ENCODE measurements at regions of chr2 and their contacts with region 1.

Region 1: GRCh38 chr2:219057709-219058540 is 2.8 kb downstream of the IHH start:
- DNase-seq: peak; percentile 86
- H3K4me3 ChIP-seq: peak overlapping the region; percentile 12 to 68 (median 55)
- H3K27ac ChIP-seq: peak overlapping the region; percentile 62 to 90 (median 86)
- H3K4me1 ChIP-seq: peaks cover 13 to 42% (median 37%) of the 10 kb centered on the region in 4 donors
- H3K27me3 ChIP-seq: peaks cover 74% of the 10 kb centered on the region
- CTCF ChIP-seq: peak; percentile 89 to 96 (median 93)
- EP300 ChIP-seq: no peak
- POLR2A ChIP-seq: no peak

Region 2: GRCh38 chr2:219119422-219120043 is 61.6 kb after region 1 on chr2:
- in situ Hi-C with region 1: loop called in 2 of 4 experiments (anchors 10 kb)
- intact Hi-C with region 1: no loop called
- DNase-seq: peak; percentile 81
- H3K4me3 ChIP-seq: no peak overlapping the region
- H3K27ac ChIP-seq: peak overlapping the region; percentile 70 to 82 (median 74)
- H3K4me1 ChIP-seq: peaks cover 7 to 76% (median 62%) of the 10 kb centered on the region in 4 donors
- H3K27me3 ChIP-seq: no peaks in the 10 kb centered on the region
- CTCF ChIP-seq: peak; percentile 61 to 85 (median 70)
- EP300 ChIP-seq: no peak
- POLR2A ChIP-seq: no peak

Region 3: GRCh38 chr2:219155054-219155644 is 97.2 kb after region 1 on chr2:
- in situ Hi-C with region 1: no loop called
- intact Hi-C with region 1: loop called (anchors 5 kb)
- DNase-seq: peak; percentile 25
- H3K4me3 ChIP-seq: no peak overlapping the region
- H3K27ac ChIP-seq: no peak overlapping the region
- H3K4me1 ChIP-seq: peaks cover 4 to 6% (median 4%) of the 10 kb centered on the region in 4 donors
- H3K27me3 ChIP-seq: no peaks in the 10 kb centered on the region
- CTCF ChIP-seq: peak; percentile 56 to 88 (median 64)
- EP300 ChIP-seq: no peak
- POLR2A ChIP-seq: no peak

Region 4: DNA sequence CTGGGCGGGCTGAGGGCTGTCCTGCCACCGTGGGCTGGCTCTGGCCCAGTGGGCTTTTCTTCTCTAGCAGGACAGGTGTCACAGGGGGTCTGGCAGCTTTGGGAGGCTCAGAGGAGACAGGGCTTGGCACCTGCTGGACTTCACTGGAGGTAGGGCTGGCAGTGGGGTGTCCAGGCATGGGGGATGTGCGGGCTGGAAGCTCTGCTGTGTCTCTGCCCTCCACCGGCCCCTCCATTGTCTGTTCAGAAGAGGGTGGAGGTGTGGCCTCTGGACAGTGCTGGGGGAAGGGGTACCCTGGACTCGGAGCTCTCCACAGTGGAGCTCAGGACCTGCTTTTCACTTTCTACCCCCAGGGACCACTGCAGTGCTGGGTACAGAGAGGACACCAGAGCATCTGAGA is 242.1 kb after region 1 on chr2:
- in situ Hi-C with region 1: loop called in 1 of 4 experiments (anchors 10 kb)
- intact Hi-C with region 1: loop called (anchors 5 kb)
- DNase-seq: no peak
- H3K4me3 ChIP-seq: no peak overlapping the region
- H3K27ac ChIP-seq: no peak overlapping the region
- H3K4me1 ChIP-seq: peaks cover 3 to 9% (median 4%) of the 10 kb centered on the region in 4 donors
- H3K27me3 ChIP-seq: peaks cover 43% of the 10 kb centered on the region
- CTCF ChIP-seq: no peak
- EP300 ChIP-seq: no peak
- POLR2A ChIP-seq: no peak

Measured in transverse colon (tissue), 4 donors.